ENCODE measurements at regions of chr22 and their contacts with region 1.

Region 1: GRCh38 chr22:46150034-46150654 is at the start of gene PPARA:
- DNase-seq: no peak
- ATAC-seq: peak; percentile 91
- H3K4me3 ChIP-seq: peak within 1 kb of the TSS; percentile 62 to 63
- H3K27ac ChIP-seq: no peak within 1 kb of the TSS
- H3K4me1 ChIP-seq: no peaks in the 10 kb centered on the region
- H3K27me3 ChIP-seq: no peaks in the 10 kb centered on the region
- CTCF ChIP-seq: no peak
- total RNA-seq, gene PPARA: 10.7 TPM

Region 2: GRCh38 chr22:46169628-46170027 is 19.5 kb after region 1 on chr22:
- CTCF ChIA-PET with region 1: interaction called, 4 read pairs
- POLR2A ChIA-PET with region 1: interaction called, 15 read pairs
- in situ Hi-C with region 1: no loop called
- intact Hi-C with region 1: no loop called
- DNase-seq: no peak
- ATAC-seq: no peak
- H3K4me3 ChIP-seq: no peak overlapping the region
- H3K27ac ChIP-seq: no peak overlapping the region
- H3K4me1 ChIP-seq: no peaks in the 10 kb centered on the region
- H3K27me3 ChIP-seq: no peaks in the 10 kb centered on the region
- CTCF ChIP-seq: no peak